B cell (primary cell): ENCODE measurements at regions of chr10 and their contacts with region 1.

Region 1: GRCh38 chr10:27155066-27155754 is at the start of gene MASTL:
- DNase-seq: peak; percentile 98
- ATAC-seq: peak; percentile 86
- H3K4me3 ChIP-seq: peak within 1 kb of the TSS; percentile 73 to 99 (median 95)
- H3K4me3 Mint-ChIP-seq: peak within 1 kb of the TSS; percentile 96
- H3K27ac ChIP-seq: peak within 1 kb of the TSS; percentile 97
- H3K27ac Mint-ChIP-seq: peak within 1 kb of the TSS; percentile 100
- H3K4me1 ChIP-seq: peaks cover 20 to 29% of the 10 kb centered on the region in 2 donors
- H3K4me1 Mint-ChIP-seq: peaks cover 48% of the 10 kb centered on the region
- H3K27me3 ChIP-seq: no peaks in the 10 kb centered on the region
- H3K27me3 Mint-ChIP-seq: no peaks in the 10 kb centered on the region
- CTCF ChIP-seq: no peak
- total RNA-seq, gene MASTL: 12.4 and 13.6 TPM in 2 replicates

Region 2: GRCh38 chr10:26437637-26438461 is 717.4 kb before region 1 on chr10 and contains the start of gene APBB1IP:
- CTCF ChIA-PET with region 1: no interaction called
- POLR2A ChIA-PET with region 1: no interaction called
- intact Hi-C with region 1: loop called (anchors 2 kb)
- DNase-seq: peak; percentile 81
- ATAC-seq: peak; percentile 82
- H3K4me3 ChIP-seq: peak within 1 kb of the TSS; percentile 73 to 89 (median 86)
- H3K4me3 Mint-ChIP-seq: peak within 1 kb of the TSS; percentile 95
- H3K27ac ChIP-seq: peak within 1 kb of the TSS; percentile 82 to 83
- H3K27ac Mint-ChIP-seq: peak within 1 kb of the TSS; percentile 99
- H3K4me1 ChIP-seq: peaks cover 31 to 44% of the 10 kb centered on the region in 2 donors
- H3K4me1 Mint-ChIP-seq: peaks cover 49% of the 10 kb centered on the region
- H3K27me3 ChIP-seq: no peaks in the 10 kb centered on the region
- H3K27me3 Mint-ChIP-seq: no peaks in the 10 kb centered on the region
- CTCF ChIP-seq: no peak
- total RNA-seq, gene APBB1IP: 97.0 and 99.8 TPM in 2 replicates

Region 3: DNA sequence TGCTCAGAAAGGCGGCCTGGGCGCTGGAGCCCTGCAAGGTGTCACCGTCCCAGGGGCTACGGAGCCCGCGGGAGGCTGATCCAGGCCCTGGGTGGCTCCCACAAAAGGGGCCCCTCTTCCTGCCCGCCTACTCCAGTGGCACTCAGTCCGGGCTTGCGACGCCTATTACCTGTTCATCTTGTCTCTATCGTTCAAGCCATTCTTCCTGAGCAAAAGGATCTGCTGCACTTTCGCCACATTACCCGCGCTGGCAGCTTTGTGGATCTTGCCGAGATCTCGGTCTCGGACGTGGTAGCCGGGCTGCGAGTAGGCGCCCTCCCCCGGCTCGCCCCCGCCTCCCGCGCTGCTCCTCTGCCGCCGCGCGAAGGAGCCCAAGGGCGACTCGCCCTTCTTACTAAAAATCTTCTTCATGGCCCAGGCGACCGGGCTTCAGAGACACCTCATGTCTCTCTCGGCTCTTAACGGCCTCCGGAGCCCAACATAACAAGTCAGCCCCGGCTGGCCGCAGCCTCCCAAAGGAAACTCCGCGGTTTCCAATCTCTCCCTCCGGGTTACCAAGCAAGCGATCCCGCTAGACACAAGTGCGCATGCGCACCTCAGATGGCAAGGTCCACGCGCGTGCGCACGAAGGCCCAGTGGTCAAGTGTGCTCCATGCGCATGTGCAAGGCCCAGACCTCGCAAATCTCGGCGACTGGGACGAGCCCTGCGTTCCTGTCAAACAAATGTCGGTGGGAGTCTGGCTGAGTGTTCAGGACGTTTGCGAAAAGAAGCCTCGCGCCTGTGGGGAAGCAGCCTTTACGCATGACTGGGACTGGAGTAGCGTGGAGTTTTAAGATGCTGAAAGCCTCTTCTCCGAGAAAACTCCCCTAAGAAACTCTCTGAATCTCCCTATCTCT is 55.0 kb before region 1 on chr10 and contains the start of gene ANKRD26:
- CTCF ChIA-PET with region 1: interaction called, 3 read pairs
- POLR2A ChIA-PET with region 1: interaction called, 4 read pairs
- intact Hi-C with region 1: loop called (anchors 1 kb)
- DNase-seq: peak; percentile 97
- ATAC-seq: peak; percentile 87
- H3K4me3 ChIP-seq: peak within 1 kb of the TSS; percentile 73 to 92 (median 84)
- H3K4me3 Mint-ChIP-seq: peak within 1 kb of the TSS; percentile 86
- H3K27ac ChIP-seq: peak within 1 kb of the TSS; percentile 81
- H3K27ac Mint-ChIP-seq: peak within 1 kb of the TSS; percentile 97
- H3K4me1 ChIP-seq: peaks cover 13 to 18% of the 10 kb centered on the region in 2 donors
- H3K4me1 Mint-ChIP-seq: peaks cover 25% of the 10 kb centered on the region
- H3K27me3 ChIP-seq: no peaks in the 10 kb centered on the region
- H3K27me3 Mint-ChIP-seq: no peaks in the 10 kb centered on the region
- CTCF ChIP-seq: no peak
- total RNA-seq, gene ANKRD26: 10.5 and 13.5 TPM in 2 replicates

Region 4: GRCh38 chr10:27188259-27188658 is 33.0 kb after region 1 on chr10:
- CTCF ChIA-PET with region 1: no interaction called
- POLR2A ChIA-PET with region 1: no interaction called
- intact Hi-C with region 1: no loop called
- DNase-seq: no peak
- ATAC-seq: no peak
- H3K4me3 ChIP-seq: no peak overlapping the region
- H3K4me3 Mint-ChIP-seq: no peak overlapping the region
- H3K27ac ChIP-seq: no peak overlapping the region
- H3K27ac Mint-ChIP-seq: no peak overlapping the region
- H3K4me1 ChIP-seq: no peaks in the 10 kb centered on the region
- H3K4me1 Mint-ChIP-seq: no peaks in the 10 kb centered on the region
- H3K27me3 ChIP-seq: no peaks in the 10 kb centered on the region
- H3K27me3 Mint-ChIP-seq: no peaks in the 10 kb centered on the region
- CTCF ChIP-seq: no peak